IMR-90 (cell line): ENCODE measurements at regions of chr19 and their contacts with region 1.

Region 1: DNA sequence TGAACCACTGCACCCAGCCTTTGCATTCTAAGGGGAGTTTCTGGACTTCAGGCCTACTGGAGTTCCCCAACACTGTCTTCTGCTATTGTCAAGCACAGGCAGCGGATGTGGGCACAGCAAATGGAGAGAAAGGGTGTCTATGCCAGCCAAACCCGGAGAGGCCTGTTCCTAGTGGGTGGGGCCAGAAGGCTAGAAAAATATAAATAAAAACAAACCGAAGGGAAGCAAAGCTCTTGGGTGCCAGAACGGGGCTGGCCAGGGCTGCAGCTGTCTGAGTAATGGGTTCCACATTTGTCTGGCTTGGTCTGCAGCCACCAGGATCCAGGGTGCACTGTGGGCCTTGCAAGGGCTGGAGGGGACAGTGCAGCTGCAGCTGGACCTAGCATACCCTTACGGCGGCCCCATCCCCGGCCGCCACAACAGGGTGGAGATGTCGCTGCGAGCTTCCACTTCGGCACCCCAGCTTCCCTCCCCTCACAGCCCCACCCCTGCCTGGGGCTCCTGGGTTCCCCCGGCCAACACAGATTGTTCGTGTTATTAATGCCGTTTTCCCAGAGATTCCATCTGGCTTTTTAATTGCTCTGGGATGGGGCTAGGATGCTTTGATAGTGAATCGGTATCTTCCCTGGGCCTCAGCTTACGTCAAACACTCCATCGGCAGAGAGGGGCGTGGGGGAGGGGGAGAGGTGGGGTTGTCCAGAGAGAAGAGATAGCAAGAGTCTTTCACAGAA is 5.9 kb downstream of the CEBPA start:
- DNase-seq: no peak
- ATAC-seq: no peak
- H3K4me3 ChIP-seq: no peak overlapping the region
- H3K27ac ChIP-seq: no peak overlapping the region
- H3K4me1 ChIP-seq: peaks cover 3% of the 10 kb centered on the region; the same call in 1 of the 2 replicates
- H3K27me3 ChIP-seq: peaks cover 64% of the 10 kb centered on the region
- CTCF ChIP-seq: no peak
- POLR2A ChIP-seq: no peak
- RAD21 ChIP-seq: no peak

Region 2: GRCh38 chr19:33022472-33023116 is 273.8 kb before region 1 on chr19:
- CTCF ChIA-PET with region 1: no interaction called
- POLR2A ChIA-PET with region 1: interaction called, 17 read pairs
- dilution Hi-C with region 1: no loop called
- in situ Hi-C with region 1: no loop called
- intact Hi-C with region 1: no loop called
- DNase-seq: no peak
- ATAC-seq: no peak
- H3K4me3 ChIP-seq: no peak overlapping the region
- H3K27ac ChIP-seq: no peak overlapping the region
- H3K4me1 ChIP-seq: no peaks in the 10 kb centered on the region
- H3K27me3 ChIP-seq: no peaks in the 10 kb centered on the region
- CTCF ChIP-seq: no peak
- POLR2A ChIP-seq: no peak
- RAD21 ChIP-seq: no peak